PC-3 (cell line): ENCODE measurements at regions of chr7 and their contacts with region 1.

Region 1: DNA sequence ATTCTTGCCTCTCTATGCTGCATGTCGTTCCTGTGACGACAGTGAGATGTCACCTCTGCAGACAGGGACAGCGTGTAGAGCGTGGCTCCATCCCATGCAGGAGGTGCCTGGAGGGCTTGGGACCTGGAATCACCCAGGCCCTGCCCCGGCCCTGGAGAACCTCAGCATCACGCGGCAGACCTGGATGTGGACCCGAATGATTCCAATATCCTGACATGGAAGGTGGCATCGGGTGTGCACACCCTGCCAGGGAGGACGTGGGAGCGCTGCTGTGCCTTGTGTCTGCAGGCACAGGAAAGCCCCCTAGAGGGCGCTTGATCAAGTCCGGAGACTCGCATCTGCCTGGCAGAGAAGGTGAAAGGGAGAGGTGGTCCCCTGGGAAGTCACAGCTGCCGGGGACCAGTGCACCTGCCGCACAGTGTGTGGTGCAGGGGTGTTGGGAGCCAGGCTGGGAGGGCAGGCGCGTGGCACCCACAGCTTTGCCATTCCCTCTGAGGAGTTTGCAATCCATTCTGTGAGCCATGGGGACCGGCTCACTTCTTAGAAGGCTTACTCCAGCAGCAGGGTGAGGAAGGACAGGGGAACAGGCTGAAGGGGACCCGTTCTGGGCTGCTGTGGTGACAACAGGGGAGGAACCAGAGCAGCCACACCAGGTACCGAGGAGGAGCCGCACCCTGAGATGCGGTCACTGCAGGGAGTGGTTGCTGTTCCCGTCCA is 45.2 kb upstream of the EN2 start:
- DNase-seq: peak; percentile 57
- ATAC-seq: peak; percentile 71
- H3K4me3 ChIP-seq: no peak overlapping the region
- H3K27ac ChIP-seq: no peak overlapping the region
- H3K4me1 ChIP-seq: no peaks in the 10 kb centered on the region
- H3K27me3 ChIP-seq: peaks cover 31% of the 10 kb centered on the region
- CTCF ChIP-seq: peak; percentile 76

Region 2: GRCh38 chr7:155533827-155534690 is 121.4 kb after region 1 on chr7:
- CTCF ChIA-PET with region 1: no interaction called
- POLR2A ChIA-PET with region 1: no interaction called
- intact Hi-C with region 1: loop called (anchors 2 kb)
- DNase-seq: no peak
- ATAC-seq: peak; percentile 48
- H3K4me3 ChIP-seq: peak overlapping the region; percentile 58
- H3K27ac ChIP-seq: no peak overlapping the region
- H3K4me1 ChIP-seq: peaks cover 20% of the 10 kb centered on the region
- H3K27me3 ChIP-seq: peaks cover 47% of the 10 kb centered on the region
- CTCF ChIP-seq: peak; percentile 69

Region 3: DNA sequence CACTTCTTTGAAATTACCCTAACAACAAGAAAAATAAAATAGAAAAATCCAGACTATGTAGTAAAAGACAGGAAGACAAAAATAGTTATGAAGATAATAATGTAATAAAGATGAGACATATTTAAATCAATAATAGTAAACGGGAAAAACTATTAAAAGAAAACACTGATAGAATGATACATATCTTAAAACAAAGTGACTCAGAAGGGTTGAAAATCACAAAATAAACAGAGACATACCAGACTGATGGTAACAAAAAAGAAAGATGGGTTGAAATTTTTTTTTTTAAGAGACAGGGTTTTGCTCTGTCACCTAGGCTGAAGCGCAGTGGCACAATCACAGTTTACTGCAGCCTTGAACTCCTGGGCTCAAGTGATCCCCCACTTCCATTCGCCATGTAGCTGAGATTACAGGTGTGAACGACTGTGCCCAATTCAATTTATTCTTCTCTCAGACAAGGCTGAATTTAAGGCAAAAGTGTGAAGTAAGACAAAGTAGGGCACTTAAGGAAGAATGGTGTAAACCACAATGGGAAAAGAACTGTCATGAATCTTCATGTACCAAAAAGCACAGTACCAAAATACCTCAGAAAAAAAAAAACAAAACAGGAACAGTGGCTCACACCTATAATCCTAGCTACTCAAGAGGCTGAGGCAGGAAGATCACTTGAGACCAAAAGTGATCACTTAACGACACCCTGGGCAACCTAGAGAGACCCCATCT is 1432.8 kb after region 1 on chr7:
- CTCF ChIA-PET with region 1: no interaction called
- POLR2A ChIA-PET with region 1: interaction called, 10 read pairs
- intact Hi-C with region 1: no loop called
- DNase-seq: peak; percentile 55
- ATAC-seq: peak; percentile 66
- H3K4me3 ChIP-seq: no peak overlapping the region
- H3K27ac ChIP-seq: peak overlapping the region; percentile 35
- H3K4me1 ChIP-seq: peaks cover 14% of the 10 kb centered on the region
- H3K27me3 ChIP-seq: no peaks in the 10 kb centered on the region
- CTCF ChIP-seq: no peak